ENCODE measurements at regions of chr7 and their contacts with region 1.

Region 1: DNA sequence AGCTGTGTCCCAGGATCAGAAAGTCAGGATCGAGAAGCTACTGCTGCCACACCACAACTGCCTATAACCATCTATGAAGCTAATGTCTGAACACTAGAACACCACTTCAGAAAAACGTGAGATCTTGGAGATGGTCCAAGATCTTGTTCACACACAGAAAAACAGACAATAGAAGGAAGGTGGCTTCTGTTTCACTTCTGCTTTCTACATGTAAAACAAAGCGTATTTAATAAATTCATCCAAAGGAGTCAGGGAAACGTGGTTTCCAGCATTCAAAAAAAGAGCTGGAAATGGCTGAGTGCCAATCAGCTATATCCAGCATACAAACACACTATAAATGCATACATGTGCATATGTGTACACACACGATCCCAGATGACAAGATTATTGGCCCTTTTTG is 70.2 kb upstream of the CCDC71L start:
- DNase-seq: peak; percentile 70 to 86 (median 80)
- H3K4me3 ChIP-seq: peak overlapping the region in 1 of 3 experiments; percentile 52
- H3K4me3 Mint-ChIP-seq: peak overlapping the region; percentile 53 to 80
- H3K27ac ChIP-seq: peak overlapping the region in 1 of 2 donors; percentile 52
- H3K27ac Mint-ChIP-seq: peak overlapping the region; percentile 54 to 86 (median 77)
- H3K4me1 ChIP-seq: peaks cover 29 to 33% of the 10 kb centered on the region in 2 donors
- H3K4me1 Mint-ChIP-seq: peaks cover 32% of the 10 kb centered on the region
- H3K27me3 ChIP-seq: no peaks in the 10 kb centered on the region
- H3K27me3 Mint-ChIP-seq: peaks cover 2 to 9% (median 7%) of the 10 kb centered on the region in 3 donors
- CTCF ChIP-seq: no peak

Region 2: DNA sequence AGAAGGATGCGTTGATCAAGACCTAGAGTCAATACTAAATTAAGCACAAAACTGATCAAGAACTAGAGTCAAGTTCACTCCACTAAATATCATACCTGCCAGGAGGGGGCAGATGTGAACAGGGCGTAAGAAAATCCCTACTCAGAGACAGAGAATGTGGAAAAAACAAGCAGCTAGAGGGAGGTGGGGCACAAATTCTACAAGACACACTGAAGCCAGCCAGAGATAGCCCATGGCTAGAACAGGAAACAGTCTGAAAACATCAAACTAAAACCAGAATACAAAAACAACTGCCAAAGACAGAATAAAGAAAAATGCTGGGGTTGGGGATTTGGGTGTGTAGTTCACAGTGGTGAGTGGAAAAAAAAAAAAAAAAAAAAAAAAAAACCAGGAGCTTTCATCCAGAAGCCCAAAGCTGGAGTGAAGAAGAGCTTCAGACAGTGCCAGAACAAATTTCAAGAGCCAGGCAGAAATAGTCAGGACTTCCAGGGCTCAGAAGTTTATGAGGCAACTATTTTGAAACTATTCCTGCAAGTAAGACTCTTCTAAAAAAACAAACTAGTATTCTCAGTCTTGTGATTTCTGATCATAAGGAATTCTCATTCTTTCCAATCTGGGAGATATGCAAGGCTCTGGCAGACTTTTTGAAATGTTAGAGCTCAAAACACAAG is 188.5 kb before region 1 on chr7:
- intact Hi-C with region 1: loop called (anchors 5 to 10 kb)
- DNase-seq: peak; percentile 54 to 66 (median 58)
- H3K4me3 ChIP-seq: no peak overlapping the region
- H3K4me3 Mint-ChIP-seq: no peak overlapping the region
- H3K27ac ChIP-seq: no peak overlapping the region
- H3K27ac Mint-ChIP-seq: peak overlapping the region in 2 of 7 donors; percentile 8 to 50
- H3K4me1 ChIP-seq: peaks cover 0 to 5% of the 10 kb centered on the region in 2 donors
- H3K4me1 Mint-ChIP-seq: peaks cover 8% of the 10 kb centered on the region
- H3K27me3 ChIP-seq: no peaks in the 10 kb centered on the region
- H3K27me3 Mint-ChIP-seq: peaks cover 0 to 5% (median 0%) of the 10 kb centered on the region in 3 donors
- CTCF ChIP-seq: peak; percentile 70